Activated B cell treated with CpG ODN at 0.5 μM for 24 hours (primary cell): ENCODE measurements at regions of chr12 and their contacts with region 1.

Region 1: GRCh38 chr12:12032851-12033588 is 37.7 kb upstream of the BCL2L14 start:
- DNase-seq: peak; percentile 34
- ATAC-seq: peak; percentile 72
- H3K4me3 Mint-ChIP-seq: peak overlapping the region; percentile 78
- H3K27ac Mint-ChIP-seq: peak overlapping the region; percentile 41
- H3K4me1 Mint-ChIP-seq: peaks cover 16% of the 10 kb centered on the region
- H3K27me3 Mint-ChIP-seq: peaks cover 5% of the 10 kb centered on the region
- CTCF ChIP-seq: peak; percentile 70

Region 2: GRCh38 chr12:11553871-11554533 is 479.0 kb before region 1 on chr12:
- CTCF ChIA-PET with region 1: interaction called, 24 read pairs
- POLR2A ChIA-PET with region 1: no interaction called
- intact Hi-C with region 1: loop called (anchors 1 kb)
- DNase-seq: no peak
- ATAC-seq: peak; percentile 79
- H3K4me3 Mint-ChIP-seq: no peak overlapping the region
- H3K27ac Mint-ChIP-seq: no peak overlapping the region
- H3K4me1 Mint-ChIP-seq: peaks cover 5% of the 10 kb centered on the region
- H3K27me3 Mint-ChIP-seq: peaks cover 5% of the 10 kb centered on the region
- CTCF ChIP-seq: peak; percentile 19

Region 3: GRCh38 chr12:11648831-11649702 is 384.0 kb before region 1 on chr12 and contains the start of gene ETV6:
- CTCF ChIA-PET with region 1: interaction called, 17 read pairs
- POLR2A ChIA-PET with region 1: interaction called, 27 read pairs
- intact Hi-C with region 1: loop called (anchors 1 kb)
- DNase-seq: peak; percentile 72
- ATAC-seq: peak; percentile 54
- H3K4me3 Mint-ChIP-seq: peak within 1 kb of the TSS; percentile 99
- H3K27ac Mint-ChIP-seq: peak within 1 kb of the TSS; percentile 98
- H3K4me1 Mint-ChIP-seq: peaks cover 30% of the 10 kb centered on the region
- H3K27me3 Mint-ChIP-seq: no peaks in the 10 kb centered on the region
- CTCF ChIP-seq: no peak
- total RNA-seq, gene ETV6: 116 and 130 TPM in 2 replicates

Region 4: GRCh38 chr12:11765817-11766794 is 266.9 kb before region 1 on chr12:
- CTCF ChIA-PET with region 1: interaction called, 11 read pairs
- POLR2A ChIA-PET with region 1: interaction called, 12 read pairs
- intact Hi-C with region 1: no loop called
- DNase-seq: peak; percentile 48
- ATAC-seq: peak; percentile 84
- H3K4me3 Mint-ChIP-seq: peak overlapping the region; percentile 77
- H3K27ac Mint-ChIP-seq: peak overlapping the region; percentile 93
- H3K4me1 Mint-ChIP-seq: peaks cover 92% of the 10 kb centered on the region
- H3K27me3 Mint-ChIP-seq: no peaks in the 10 kb centered on the region
- CTCF ChIP-seq: no peak

Region 5: GRCh38 chr12:11891754-11892386 is 141.2 kb before region 1 on chr12:
- CTCF ChIA-PET with region 1: interaction called, 4 read pairs
- POLR2A ChIA-PET with region 1: interaction called, 3 read pairs
- intact Hi-C with region 1: loop called (anchors 5 kb)
- DNase-seq: no peak
- ATAC-seq: no peak
- H3K4me3 Mint-ChIP-seq: no peak overlapping the region
- H3K27ac Mint-ChIP-seq: peak overlapping the region; percentile 18
- H3K4me1 Mint-ChIP-seq: peaks cover 45% of the 10 kb centered on the region
- H3K27me3 Mint-ChIP-seq: no peaks in the 10 kb centered on the region
- CTCF ChIP-seq: no peak

Region 6: GRCh38 chr12:12704593-12705230 is 671.7 kb after region 1 on chr12:
- CTCF ChIA-PET with region 1: no interaction called
- POLR2A ChIA-PET with region 1: no interaction called
- intact Hi-C with region 1: loop called (anchors 10 kb)
- DNase-seq: no peak
- ATAC-seq: peak; percentile 87
- H3K4me3 Mint-ChIP-seq: no peak overlapping the region
- H3K27ac Mint-ChIP-seq: no peak overlapping the region
- H3K4me1 Mint-ChIP-seq: peaks cover 9% of the 10 kb centered on the region
- H3K27me3 Mint-ChIP-seq: no peaks in the 10 kb centered on the region
- CTCF ChIP-seq: no peak